HCT116 (cell line): ENCODE measurements at regions of chr1 and their contacts with region 1.

Region 1: DNA sequence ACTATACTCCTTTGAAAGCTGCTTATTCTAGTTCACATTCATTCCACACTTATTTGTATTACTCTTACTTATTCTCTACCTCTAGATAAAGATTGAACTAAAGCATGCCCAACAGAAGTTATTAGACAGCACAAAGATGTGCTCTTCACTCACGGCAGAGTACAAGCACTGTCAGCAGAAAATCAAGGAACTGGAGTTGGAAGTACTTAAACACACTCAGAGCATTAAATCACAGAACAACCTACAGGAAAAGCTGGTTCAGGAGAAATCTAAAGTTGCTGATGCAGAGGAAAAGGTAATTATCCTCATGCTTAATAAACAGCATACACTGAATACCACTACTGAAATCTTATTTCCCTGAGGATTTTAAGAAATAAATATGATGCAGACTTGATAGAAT is 81.3 kb upstream of the PPIH start:
- DNase-seq: no peak
- ATAC-seq: no peak
- H3K4me3 ChIP-seq: no peak overlapping the region
- H3K27ac ChIP-seq: no peak overlapping the region
- H3K4me1 ChIP-seq: no peaks in the 10 kb centered on the region
- H3K27me3 ChIP-seq: no peaks in the 10 kb centered on the region
- CTCF ChIP-seq: no peak
- POLR2A ChIP-seq: no peak
- RAD21 ChIP-seq: no peak

Region 2: GRCh38 chr1:41573785-41574713 is 1002.9 kb before region 1 on chr1:
- CTCF ChIA-PET with region 1: no interaction called
- POLR2A ChIA-PET with region 1: no interaction called
- RAD21 ChIA-PET with region 1: no interaction called
- intact Hi-C with region 1: loop called (anchors 10 kb)
- DNase-seq: peak; percentile 54
- ATAC-seq: peak; percentile 97
- H3K4me3 ChIP-seq: no peak overlapping the region
- H3K27ac ChIP-seq: no peak overlapping the region
- H3K4me1 ChIP-seq: peaks cover 0 to 4% of the 10 kb centered on the region in 2 experiments; a peak in 1 of 4 replicates
- H3K27me3 ChIP-seq: no peaks in the 10 kb centered on the region
- CTCF ChIP-seq: peak; percentile 90 to 96 (median 94)
- POLR2A ChIP-seq: no peak
- RAD21 ChIP-seq: peak; percentile 99

Region 3: GRCh38 chr1:42730988-42731387 is 154.1 kb after region 1 on chr1:
- CTCF ChIA-PET with region 1: interaction called, 15 read pairs
- POLR2A ChIA-PET with region 1: no interaction called
- RAD21 ChIA-PET with region 1: no interaction called
- intact Hi-C with region 1: loop called (anchors 2 kb)
- DNase-seq: peak; percentile 64
- ATAC-seq: peak; percentile 84
- H3K4me3 ChIP-seq: no peak overlapping the region
- H3K27ac ChIP-seq: no peak overlapping the region
- H3K4me1 ChIP-seq: peaks cover 4 to 6% of the 10 kb centered on the region in 2 experiments
- H3K27me3 ChIP-seq: no peaks in the 10 kb centered on the region
- CTCF ChIP-seq: peak; percentile 53 to 85 (median 58)
- POLR2A ChIP-seq: no peak
- RAD21 ChIP-seq: peak; percentile 94

Region 4: GRCh38 chr1:42756956-42757891 is 180.3 kb after region 1 on chr1:
- CTCF ChIA-PET with region 1: interaction called, 13 read pairs
- POLR2A ChIA-PET with region 1: no interaction called
- RAD21 ChIA-PET with region 1: no interaction called
- intact Hi-C with region 1: loop called (anchors 2 kb)
- DNase-seq: peak; percentile 55
- ATAC-seq: peak; percentile 88
- H3K4me3 ChIP-seq: no peak overlapping the region
- H3K27ac ChIP-seq: no peak overlapping the region; the same call in 1 of the 2 replicates
- H3K4me1 ChIP-seq: 0 out of 4 replicates have a peak, but pooled peaks cover 0 to 5% of the 10 kb centered on the region in 2 experiments
- H3K27me3 ChIP-seq: no peaks in the 10 kb centered on the region
- CTCF ChIP-seq: peak; percentile 65 to 84 (median 81); a peak in 5 of 6 replicates
- POLR2A ChIP-seq: no peak
- RAD21 ChIP-seq: peak; percentile 63

Region 5: DNA sequence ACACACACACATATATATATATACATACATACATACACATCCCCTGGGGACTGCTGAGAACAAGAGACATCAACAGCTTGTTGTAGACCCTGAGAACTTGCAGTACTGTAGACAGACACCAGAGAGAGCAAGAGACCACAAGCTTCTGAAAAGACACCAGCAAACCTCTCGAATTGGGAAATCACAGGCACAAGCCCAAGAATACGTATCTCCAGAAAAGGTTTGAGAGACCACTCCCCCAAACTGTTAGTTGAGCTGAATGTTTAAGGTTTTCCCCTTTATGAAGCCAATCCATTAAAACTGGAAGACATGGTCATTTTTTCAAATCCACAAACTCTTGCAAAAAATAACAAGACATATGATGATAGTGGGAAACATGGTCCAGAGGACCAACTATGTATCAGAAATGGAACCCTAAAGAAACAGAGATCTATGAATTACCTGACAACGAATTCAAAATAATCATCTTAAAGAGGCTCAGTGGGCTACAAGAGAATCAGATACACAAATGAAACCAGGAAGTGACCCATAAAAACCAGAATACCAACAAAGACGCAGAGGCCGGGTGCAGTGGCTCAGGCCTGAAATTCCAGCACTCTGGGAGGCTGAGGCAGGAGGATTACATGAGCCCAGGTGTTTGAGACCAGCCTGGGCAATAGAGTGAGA is 336.6 kb after region 1 on chr1:
- CTCF ChIA-PET with region 1: interaction called, 3 read pairs
- POLR2A ChIA-PET with region 1: no interaction called
- RAD21 ChIA-PET with region 1: no interaction called
- intact Hi-C with region 1: loop called (anchors 10 kb)
- DNase-seq: peak; percentile 78
- ATAC-seq: peak; percentile 96
- H3K4me3 ChIP-seq: no peak overlapping the region
- H3K27ac ChIP-seq: no peak overlapping the region
- H3K4me1 ChIP-seq: peaks cover 0 to 3% of the 10 kb centered on the region in 2 experiments; a peak in 1 of 4 replicates
- H3K27me3 ChIP-seq: no peaks in the 10 kb centered on the region
- CTCF ChIP-seq: peak; percentile 73 to 84 (median 77)
- POLR2A ChIP-seq: no peak
- RAD21 ChIP-seq: peak; percentile 91